ENCODE measurements at regions of chr6 and their contacts with region 1.

Region 1: DNA sequence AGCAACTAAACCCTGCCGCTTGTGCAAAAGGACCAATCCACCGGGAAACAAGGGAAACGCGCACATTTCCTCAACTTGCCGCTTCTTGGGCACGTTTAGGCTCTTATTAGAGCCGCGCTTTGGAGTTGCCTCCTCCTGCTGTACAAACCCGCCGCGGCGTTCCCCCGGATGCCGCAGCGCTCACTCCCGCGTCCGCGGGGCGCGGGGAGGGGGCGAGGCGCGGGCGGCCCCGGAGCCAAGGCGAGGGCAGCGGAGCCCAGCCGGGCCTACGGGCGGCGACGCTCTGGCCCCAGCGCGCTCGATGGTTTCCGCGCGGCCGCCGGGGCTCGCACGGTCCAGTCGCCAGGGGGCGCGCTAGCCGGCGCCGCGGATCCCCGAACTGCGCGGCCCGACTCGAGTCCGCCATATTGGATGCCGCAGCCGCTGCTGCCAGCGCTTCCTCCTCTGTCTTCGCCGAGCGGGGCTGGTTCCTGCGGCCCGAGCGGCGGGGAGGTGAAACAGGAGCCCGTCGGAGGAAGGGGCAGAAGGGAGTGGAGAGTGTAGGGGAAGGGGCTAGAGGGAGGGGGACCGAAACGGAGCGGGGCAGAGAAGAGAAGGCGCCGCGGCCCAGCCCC is at the start of gene SCAF8:
- DNase-seq: peak; percentile 81 to 86 (median 81)
- H3K4me3 ChIP-seq: peak within 1 kb of the TSS; percentile 68 to 95 (median 94)
- H3K4me3 Mint-ChIP-seq: peak within 1 kb of the TSS; percentile 91 to 95
- H3K27ac ChIP-seq: peak within 1 kb of the TSS; percentile 92 to 94
- H3K27ac Mint-ChIP-seq: peak within 1 kb of the TSS; percentile 93 to 98 (median 96)
- H3K4me1 ChIP-seq: peaks cover 23 to 46% of the 10 kb centered on the region in 2 donors
- H3K4me1 Mint-ChIP-seq: peaks cover 43% of the 10 kb centered on the region
- H3K27me3 ChIP-seq: no peaks in the 10 kb centered on the region
- H3K27me3 Mint-ChIP-seq: peaks cover 0 to 3% (median 0%) of the 10 kb centered on the region in 3 donors
- CTCF ChIP-seq: peak; percentile 95
- polyA plus RNA-seq, gene SCAF8: 2.8 to 18.5 (median 4.2) TPM

Region 2: GRCh38 chr6:154683756-154684523 is 49.2 kb before region 1 on chr6:
- intact Hi-C with region 1: loop called in 1 of 2 experiments (anchors 5 kb)
- DNase-seq: peak; percentile 51 to 62 (median 56)
- H3K4me3 ChIP-seq: peak overlapping the region in 1 of 3 experiments; percentile 34
- H3K4me3 Mint-ChIP-seq: peak overlapping the region in 1 of 2 donors; percentile 46
- H3K27ac ChIP-seq: peak overlapping the region; percentile 9 to 82
- H3K27ac Mint-ChIP-seq: peak overlapping the region; percentile 81 to 92 (median 88)
- H3K4me1 ChIP-seq: peaks cover 13 to 17% of the 10 kb centered on the region in 2 donors
- H3K4me1 Mint-ChIP-seq: peaks cover 13% of the 10 kb centered on the region
- H3K27me3 ChIP-seq: no peaks in the 10 kb centered on the region
- H3K27me3 Mint-ChIP-seq: peaks cover 0 to 1% (median 0%) of the 10 kb centered on the region in 3 donors
- CTCF ChIP-seq: no peak

Region 3: GRCh38 chr6:154754152-154754551 is 21.0 kb after region 1 on chr6:
- intact Hi-C with region 1: no loop called
- DNase-seq: no peak
- H3K4me3 ChIP-seq: no peak overlapping the region
- H3K4me3 Mint-ChIP-seq: no peak overlapping the region
- H3K27ac ChIP-seq: peak overlapping the region in 1 of 2 donors; percentile 37
- H3K27ac Mint-ChIP-seq: peak overlapping the region in 3 of 7 donors; percentile 4 to 63 (median 50)
- H3K4me1 ChIP-seq: peaks cover 5 to 9% of the 10 kb centered on the region in 2 donors
- H3K4me1 Mint-ChIP-seq: peaks cover 40% of the 10 kb centered on the region
- H3K27me3 ChIP-seq: no peaks in the 10 kb centered on the region
- H3K27me3 Mint-ChIP-seq: no peaks in the 10 kb centered on the region
- CTCF ChIP-seq: no peak

Region 4: DNA sequence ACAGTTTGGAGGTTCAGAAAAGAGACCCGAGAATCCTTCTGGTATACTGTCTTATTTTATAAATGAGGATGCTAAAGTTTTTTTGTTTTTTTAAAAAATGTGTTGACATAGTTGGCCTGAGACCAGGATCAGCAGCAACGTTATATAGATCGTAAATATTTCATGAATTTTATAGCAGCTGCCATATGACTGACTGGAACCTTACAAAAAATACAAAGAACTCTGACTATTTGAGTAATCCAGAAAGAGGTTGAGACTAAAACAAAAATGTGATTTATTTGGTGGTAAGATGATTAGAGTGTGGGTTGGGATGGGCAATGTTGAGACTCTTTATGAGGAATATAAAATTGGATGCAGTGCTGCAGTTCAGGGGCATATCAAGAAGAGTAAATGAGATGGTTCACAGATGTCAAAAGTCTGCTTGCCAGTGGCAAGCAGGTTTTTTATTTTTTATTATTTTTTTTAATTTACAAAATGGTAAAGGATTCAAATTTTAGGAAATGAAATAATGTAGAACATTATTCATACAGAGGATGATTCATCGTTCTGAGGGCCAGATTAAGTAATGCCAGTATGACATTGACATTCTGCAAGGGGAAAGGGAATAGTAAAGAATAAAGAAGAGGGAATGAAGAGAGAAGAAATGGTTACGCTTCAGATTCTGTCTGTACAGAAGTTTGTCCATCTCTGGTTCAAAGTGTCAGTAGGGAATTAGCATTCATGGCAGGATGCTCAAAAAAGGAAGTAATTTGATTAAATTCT is 58.6 kb after region 1 on chr6:
- intact Hi-C with region 1: loop called (anchors 5 to 10 kb)
- DNase-seq: peak; percentile 34 to 67 (median 40)
- H3K4me3 ChIP-seq: no peak overlapping the region
- H3K4me3 Mint-ChIP-seq: no peak overlapping the region
- H3K27ac ChIP-seq: peak overlapping the region in 1 of 2 donors; percentile 54
- H3K27ac Mint-ChIP-seq: peak overlapping the region in 5 of 7 donors; percentile 35 to 74 (median 63)
- H3K4me1 ChIP-seq: peaks cover 5 to 7% of the 10 kb centered on the region in 2 donors
- H3K4me1 Mint-ChIP-seq: peaks cover 12% of the 10 kb centered on the region
- H3K27me3 ChIP-seq: no peaks in the 10 kb centered on the region
- H3K27me3 Mint-ChIP-seq: no peaks in the 10 kb centered on the region
- CTCF ChIP-seq: no peak

Region 5: DNA sequence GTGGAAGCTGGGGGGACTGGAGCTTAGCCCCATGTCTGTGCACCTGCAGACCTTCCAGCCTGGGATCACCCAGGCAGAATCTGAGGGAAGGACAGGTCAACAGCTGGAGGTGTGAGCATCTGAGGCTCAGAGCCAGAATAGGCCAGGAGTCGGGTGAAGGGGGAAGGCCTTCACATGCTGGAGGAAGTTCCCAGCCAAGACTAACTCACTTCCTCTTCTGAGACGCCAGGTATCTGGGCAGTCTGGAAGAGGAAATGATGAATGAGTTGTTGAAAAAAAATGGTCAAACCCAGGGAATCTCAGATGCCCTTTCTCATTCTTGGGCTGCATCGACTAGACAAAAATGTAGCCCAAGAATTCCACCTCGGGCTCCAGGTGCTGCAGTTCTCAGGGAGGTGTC is 188.4 kb after region 1 on chr6:
- intact Hi-C with region 1: no loop called
- DNase-seq: peak; percentile 18 to 49 (median 24)
- H3K4me3 ChIP-seq: no peak overlapping the region
- H3K4me3 Mint-ChIP-seq: no peak overlapping the region
- H3K27ac ChIP-seq: no peak overlapping the region
- H3K27ac Mint-ChIP-seq: peak overlapping the region in 1 of 7 donors; percentile 66
- H3K4me1 ChIP-seq: peaks cover 0 to 7% of the 10 kb centered on the region in 2 donors
- H3K4me1 Mint-ChIP-seq: peaks cover 7% of the 10 kb centered on the region
- H3K27me3 ChIP-seq: no peaks in the 10 kb centered on the region
- H3K27me3 Mint-ChIP-seq: peaks cover 1 to 3% (median 2%) of the 10 kb centered on the region in 3 donors
- CTCF ChIP-seq: no peak